ENCODE measurements at regions of chr2 and their contacts with region 1.

Region 1: DNA sequence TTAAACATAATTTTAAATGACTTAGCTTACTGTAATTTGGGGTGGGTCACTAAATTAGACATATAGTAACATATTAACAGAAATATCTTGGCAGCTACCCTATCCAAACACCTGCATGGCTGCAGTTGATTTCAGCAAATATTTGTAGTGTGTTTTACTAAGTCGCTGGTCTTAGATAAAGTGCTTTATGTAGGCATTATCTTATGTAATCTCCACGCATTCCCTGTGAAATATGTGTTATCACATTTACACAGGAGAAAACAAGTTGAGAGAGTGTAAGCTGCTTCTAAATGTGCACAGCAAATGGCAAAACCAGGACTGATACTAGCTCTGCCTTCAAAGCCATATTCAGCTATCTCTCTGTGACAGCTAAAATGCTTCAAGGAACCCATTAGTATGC is 72.0 kb downstream of the NYAP2 start:
- DNase-seq: no peak
- ATAC-seq: no peak
- H3K4me3 ChIP-seq: no peak overlapping the region
- H3K27ac ChIP-seq: no peak overlapping the region
- H3K4me1 ChIP-seq: no peaks in the 10 kb centered on the region
- H3K27me3 ChIP-seq: no peaks in the 10 kb centered on the region
- CTCF ChIP-seq: no peak

Region 2: DNA sequence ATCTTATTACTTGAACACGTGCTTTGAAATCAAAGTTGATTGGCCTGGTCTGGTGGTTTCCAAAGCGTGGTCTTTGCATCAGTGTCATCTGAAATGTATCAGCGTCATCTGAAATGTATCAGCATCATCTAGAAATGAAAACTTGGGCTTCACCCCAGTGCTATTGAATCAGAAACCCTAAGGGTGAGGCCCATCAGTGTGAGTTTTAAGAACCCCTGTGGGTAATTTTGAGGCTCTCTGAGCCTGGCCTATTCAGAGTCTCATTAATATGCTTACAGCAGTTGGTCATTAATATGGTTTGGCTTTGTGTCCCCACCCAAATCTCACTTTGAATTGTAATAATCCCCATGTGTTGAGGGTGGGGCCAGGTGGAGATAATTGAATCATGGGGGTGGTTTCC is 13.3 kb after region 1 on chr2:
- intact Hi-C with region 1: loop called in 1 of 2 experiments (anchors 2 kb)
- DNase-seq: no peak
- ATAC-seq: no peak
- H3K4me3 ChIP-seq: no peak overlapping the region
- H3K27ac ChIP-seq: no peak overlapping the region
- H3K4me1 ChIP-seq: no peaks in the 10 kb centered on the region
- H3K27me3 ChIP-seq: no peaks in the 10 kb centered on the region
- CTCF ChIP-seq: no peak